Left cardiac atrium (tissue), 4 donors: ENCODE measurements at regions of chr20 and their contacts with region 1.

Region 1: DNA sequence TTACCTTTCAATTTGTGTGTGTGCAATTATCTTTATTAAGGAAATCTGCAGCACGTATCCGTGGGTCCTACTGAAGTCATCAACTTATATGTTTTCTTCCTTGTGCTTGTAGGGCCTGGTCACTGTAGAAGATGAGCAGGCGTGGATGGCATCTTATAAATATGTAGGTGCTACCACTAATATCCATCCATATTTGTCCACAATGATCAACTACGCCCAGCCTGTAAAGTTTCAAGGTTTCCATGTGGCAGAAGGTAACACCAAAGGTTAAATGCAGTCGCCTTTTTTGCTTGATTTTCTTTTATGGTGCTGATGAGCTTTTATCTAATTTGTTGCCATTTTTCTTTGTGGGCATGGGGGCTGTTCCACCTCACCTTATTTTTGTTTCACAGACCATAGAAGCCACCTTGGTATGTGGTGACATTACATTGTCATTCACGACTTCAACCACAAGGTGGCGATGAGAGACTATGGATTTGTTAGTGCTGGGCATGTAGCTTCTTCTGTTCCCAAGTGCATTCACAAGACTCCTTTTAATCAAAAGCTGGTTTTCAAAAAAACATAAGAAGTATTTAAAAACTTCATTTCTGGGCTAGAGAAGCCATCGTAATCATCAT is 106.5 kb upstream of the LAMP5 start:
- DNase-seq: peak; percentile 24
- ATAC-seq: peak; percentile 83 to 87

Region 2: GRCh38 chr20:8976303-8976702 is 431.6 kb before region 1 on chr20:
- intact Hi-C with region 1: no loop called
- DNase-seq: no peak
- ATAC-seq: no peak

Region 3: DNA sequence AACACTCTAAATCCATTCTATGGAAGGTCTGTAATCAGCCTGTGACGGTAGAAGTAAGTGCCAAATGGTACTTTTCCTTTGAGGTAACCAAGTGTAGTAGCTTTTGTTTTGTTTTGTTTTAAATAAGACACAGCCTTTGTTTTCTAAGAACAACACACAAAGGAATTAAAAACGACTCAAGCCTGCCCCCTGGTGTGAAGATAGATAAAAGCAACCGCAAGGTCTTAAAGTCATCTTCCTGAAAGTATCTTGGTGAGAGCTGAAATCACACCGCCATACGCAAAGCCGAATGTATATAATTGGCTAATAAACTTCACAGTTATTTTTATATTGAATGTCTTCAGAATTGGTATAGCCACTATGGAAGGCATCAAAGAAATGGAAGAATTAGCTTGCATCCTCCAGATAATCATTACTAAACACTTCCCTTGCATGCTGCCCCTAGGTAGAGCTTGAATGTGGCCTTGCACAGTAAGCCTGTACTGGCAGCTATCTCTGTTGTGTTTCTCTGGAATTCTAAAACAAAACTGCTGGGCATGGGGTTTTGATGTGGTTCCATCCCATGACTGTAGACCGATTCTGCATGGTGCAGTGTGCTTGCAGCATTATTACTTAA is 202.1 kb after region 1 on chr20:
- intact Hi-C with region 1: loop called (anchors 1 to 5 kb)
- DNase-seq: no peak
- ATAC-seq: no peak

Region 4: GRCh38 chr20:9912858-9913434 is 505.0 kb after region 1 on chr20:
- intact Hi-C with region 1: loop called in 1 of 2 experiments (anchors 10 kb)
- DNase-seq: peak; percentile 31
- ATAC-seq: no peak

Region 5: DNA sequence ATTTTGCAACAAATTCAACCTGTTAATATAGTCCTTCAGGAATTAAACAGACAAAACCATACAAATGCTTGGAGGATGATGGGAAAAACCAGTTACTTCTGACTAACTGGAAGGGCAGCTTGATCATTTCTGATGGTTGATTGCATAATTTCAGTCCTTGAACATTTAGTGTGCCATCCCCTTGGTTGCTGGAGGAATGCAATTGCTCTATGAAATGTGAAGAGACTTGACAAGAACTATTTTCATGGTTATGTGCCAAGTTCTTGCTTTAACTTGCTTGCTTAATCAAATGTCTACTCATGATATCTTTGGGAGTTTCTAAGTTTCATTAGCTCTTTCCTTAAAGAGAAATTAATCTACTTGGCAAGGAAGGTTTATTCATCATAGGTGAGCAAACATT is 672.1 kb after region 1 on chr20:
- intact Hi-C with region 1: loop called in 1 of 2 experiments (anchors 10 kb)
- DNase-seq: no peak
- ATAC-seq: peak; percentile 38 to 78